HCT116 (cell line): ENCODE measurements at regions of chr7 and their contacts with region 1.

Region 1: GRCh38 chr7:90629297-90629918 is 33.3 kb downstream of the CDK14 start:
- DNase-seq: peak; percentile 31
- ATAC-seq: peak; percentile 93
- H3K4me3 ChIP-seq: no peak overlapping the region
- H3K27ac ChIP-seq: no peak overlapping the region
- H3K4me1 ChIP-seq: peaks cover 4 to 8% of the 10 kb centered on the region in 2 experiments; a peak in 2 of 4 replicates
- H3K27me3 ChIP-seq: no peaks in the 10 kb centered on the region
- CTCF ChIP-seq: peak; percentile 52 to 79 (median 65); a peak in 5 of 6 replicates
- POLR2A ChIP-seq: no peak
- RAD21 ChIP-seq: peak; percentile 66

Region 2: GRCh38 chr7:90455163-90456030 is 174.0 kb before region 1 on chr7:
- CTCF ChIA-PET with region 1: interaction called, 18 read pairs
- POLR2A ChIA-PET with region 1: no interaction called
- RAD21 ChIA-PET with region 1: interaction called in 1 of 2 experiments, 4 read pairs
- intact Hi-C with region 1: loop called (anchors 1 kb)
- DNase-seq: peak; percentile 28
- ATAC-seq: peak; percentile 90
- H3K4me3 ChIP-seq: peak overlapping the region in 1 of 2 experiments; percentile 34; a peak in 2 of 4 replicates
- H3K27ac ChIP-seq: no peak overlapping the region
- H3K4me1 ChIP-seq: peaks cover 0 to 4% of the 10 kb centered on the region in 2 experiments; a peak in 1 of 4 replicates
- H3K27me3 ChIP-seq: no peaks in the 10 kb centered on the region
- CTCF ChIP-seq: peak; percentile 62 to 78 (median 63); a peak in 5 of 6 replicates
- POLR2A ChIP-seq: no peak
- RAD21 ChIP-seq: peak; percentile 74

Region 3: DNA sequence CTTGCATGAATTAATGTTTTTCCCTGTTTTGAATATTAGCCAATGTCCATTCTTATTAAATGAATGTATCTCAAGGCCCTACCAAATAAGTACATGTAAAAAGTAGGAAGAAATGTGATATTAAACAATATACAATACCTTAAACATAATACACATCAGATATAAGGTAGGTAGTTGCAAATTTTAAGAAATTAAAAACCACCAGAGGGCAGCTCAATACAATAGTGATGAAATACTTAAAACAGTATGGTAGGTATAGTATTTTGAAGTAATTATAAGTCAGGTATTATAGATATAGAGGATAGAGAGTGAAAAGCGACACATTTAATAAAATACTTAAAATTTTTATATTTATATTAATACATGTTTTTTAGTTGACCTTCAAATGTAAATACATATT is 76.9 kb before region 1 on chr7:
- CTCF ChIA-PET with region 1: no interaction called
- POLR2A ChIA-PET with region 1: no interaction called
- RAD21 ChIA-PET with region 1: no interaction called
- intact Hi-C with region 1: loop called (anchors 1 kb)
- DNase-seq: no peak
- ATAC-seq: no peak
- H3K4me3 ChIP-seq: no peak overlapping the region
- H3K27ac ChIP-seq: no peak overlapping the region
- H3K4me1 ChIP-seq: no peaks in the 10 kb centered on the region
- H3K27me3 ChIP-seq: no peaks in the 10 kb centered on the region
- CTCF ChIP-seq: peak in 2 of 3 experiments; percentile 28 to 36; a peak in 2 of 6 replicates
- POLR2A ChIP-seq: no peak
- RAD21 ChIP-seq: peak; percentile 56